Endothelial cell of umbilical vein (primary cell): ENCODE measurements at regions of chr11 and their contacts with region 1.

Region 1: GRCh38 chr11:47886096-47886495 is 37.9 kb upstream of the NUP160 start:
- DNase-seq: peak; percentile 87
- H3K4me3 ChIP-seq: no peak overlapping the region
- H3K27ac ChIP-seq: peak overlapping the region; percentile 9
- H3K4me1 ChIP-seq: peaks cover 18% of the 10 kb centered on the region
- H3K27me3 ChIP-seq: no peaks in the 10 kb centered on the region
- CTCF ChIP-seq: no peak
- POLR2A ChIP-seq: no peak

Region 2: DNA sequence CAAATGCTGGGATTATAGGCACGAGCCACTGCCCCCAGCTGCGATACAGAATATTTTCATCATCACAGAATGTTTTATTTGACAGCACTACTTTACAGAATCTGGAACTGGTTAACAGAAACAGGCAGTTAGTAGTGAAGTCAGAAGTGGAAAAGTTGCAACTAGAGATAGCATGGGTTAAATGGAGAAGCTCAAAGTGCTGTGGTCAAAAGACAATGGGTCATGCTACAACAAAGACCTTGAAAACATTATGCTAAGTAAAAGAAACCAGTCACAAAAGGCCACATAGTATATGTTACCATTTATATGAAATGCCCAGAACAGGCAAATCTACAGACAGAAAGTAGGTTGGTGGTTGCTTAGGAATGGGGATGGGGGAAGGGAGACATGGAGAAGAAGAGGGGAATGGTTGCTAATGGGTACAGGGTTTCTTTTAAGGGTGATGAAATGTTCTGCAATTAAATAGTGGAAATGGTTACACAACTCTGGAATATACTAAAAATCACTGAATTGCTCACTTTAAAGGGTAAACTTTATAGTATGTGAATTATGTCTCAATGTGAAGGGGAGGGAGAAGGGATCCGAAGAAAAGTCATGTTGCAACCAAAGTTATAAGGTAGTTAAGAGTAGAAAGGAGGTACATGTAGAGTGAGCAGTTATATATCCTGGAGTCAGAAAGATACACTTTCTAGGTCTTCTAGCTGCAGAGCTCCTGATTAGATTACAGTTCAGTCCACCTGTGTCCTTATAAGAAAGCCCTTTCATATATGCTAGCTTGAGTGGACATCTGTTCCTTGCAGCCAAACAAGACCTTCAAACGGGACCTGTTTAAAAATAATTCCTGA is 390.9 kb before region 1 on chr11:
- CTCF ChIA-PET with region 1: no interaction called
- POLR2A ChIA-PET with region 1: no interaction called
- dilution Hi-C with region 1: no loop called
- intact Hi-C with region 1: no loop called
- DNase-seq: no peak
- H3K4me3 ChIP-seq: no peak overlapping the region
- H3K27ac ChIP-seq: no peak overlapping the region
- H3K4me1 ChIP-seq: peaks cover 3% of the 10 kb centered on the region
- H3K27me3 ChIP-seq: no peaks in the 10 kb centered on the region
- CTCF ChIP-seq: no peak
- POLR2A ChIP-seq: no peak

Region 3: GRCh38 chr11:47689480-47689879 is 196.6 kb before region 1 on chr11:
- CTCF ChIA-PET with region 1: no interaction called
- POLR2A ChIA-PET with region 1: no interaction called
- dilution Hi-C with region 1: no loop called
- intact Hi-C with region 1: no loop called
- DNase-seq: no peak
- H3K4me3 ChIP-seq: no peak overlapping the region
- H3K27ac ChIP-seq: no peak overlapping the region
- H3K4me1 ChIP-seq: no peaks in the 10 kb centered on the region
- H3K27me3 ChIP-seq: peaks cover 0 to 2% of the 10 kb centered on the region in 2 experiments
- CTCF ChIP-seq: no peak
- POLR2A ChIP-seq: no peak

Region 4: GRCh38 chr11:47837292-47837691 is 48.8 kb before region 1 on chr11:
- CTCF ChIA-PET with region 1: no interaction called
- POLR2A ChIA-PET with region 1: no interaction called
- dilution Hi-C with region 1: no loop called
- intact Hi-C with region 1: no loop called
- DNase-seq: no peak
- H3K4me3 ChIP-seq: no peak overlapping the region
- H3K27ac ChIP-seq: no peak overlapping the region
- H3K4me1 ChIP-seq: peaks cover 2% of the 10 kb centered on the region
- H3K27me3 ChIP-seq: no peaks in the 10 kb centered on the region
- CTCF ChIP-seq: no peak
- POLR2A ChIP-seq: no peak

Region 5: DNA sequence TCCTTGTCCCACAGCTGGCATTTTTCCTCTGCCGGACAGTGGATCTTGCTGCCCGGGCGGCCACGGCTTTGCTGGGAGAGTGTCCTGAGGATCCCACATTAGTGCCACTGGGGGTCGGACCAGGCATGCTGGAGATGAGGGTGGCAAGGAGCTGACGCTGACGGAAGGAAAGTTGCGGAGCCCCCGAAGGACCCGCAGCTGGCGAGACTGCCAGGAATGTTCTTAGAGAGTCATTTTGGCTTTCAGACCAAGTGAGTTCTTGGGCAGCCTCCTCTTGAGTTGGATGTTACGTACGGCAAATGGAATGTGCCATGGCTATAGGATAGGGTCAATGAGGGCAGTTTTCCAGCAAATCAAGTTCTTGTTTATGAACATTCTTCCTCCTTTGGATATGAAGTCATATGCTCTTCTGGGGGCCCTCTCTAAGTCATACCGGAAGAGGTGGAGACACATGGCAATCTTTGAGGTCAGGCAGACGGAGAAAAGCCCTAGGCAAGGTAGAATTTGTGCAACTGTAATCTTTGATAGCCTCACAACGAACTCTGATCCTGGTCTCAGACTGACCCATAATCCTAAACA is 19.5 kb after region 1 on chr11:
- CTCF ChIA-PET with region 1: interaction called, 3 read pairs
- POLR2A ChIA-PET with region 1: interaction called, 8 read pairs
- dilution Hi-C with region 1: no loop called
- intact Hi-C with region 1: loop called (anchors 1 kb)
- DNase-seq: peak; percentile 97
- H3K4me3 ChIP-seq: no peak overlapping the region
- H3K27ac ChIP-seq: peak overlapping the region; percentile 95
- H3K4me1 ChIP-seq: peaks cover 15% of the 10 kb centered on the region
- H3K27me3 ChIP-seq: no peaks in the 10 kb centered on the region
- CTCF ChIP-seq: no peak
- POLR2A ChIP-seq: peak; percentile 63

Region 6: DNA sequence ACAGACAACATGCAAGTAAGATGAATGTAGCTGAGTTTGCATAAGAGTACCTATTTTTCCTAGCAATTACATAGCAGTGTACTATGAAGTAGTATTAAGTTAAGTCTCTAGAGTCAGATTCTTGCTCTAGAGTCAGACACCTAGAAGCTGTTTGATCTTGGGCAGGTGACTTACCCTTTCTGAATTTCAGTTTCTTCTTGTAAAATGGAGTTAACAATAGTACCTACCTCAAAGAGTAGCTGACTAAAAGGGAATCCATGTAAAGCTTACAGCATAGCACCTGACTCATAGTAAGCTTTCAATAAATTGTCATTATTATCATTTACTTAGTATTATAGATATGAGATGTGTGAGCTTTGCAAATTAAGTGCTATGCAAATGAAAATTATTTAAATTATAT is 46.4 kb after region 1 on chr11:
- CTCF ChIA-PET with region 1: interaction called, 11 read pairs
- POLR2A ChIA-PET with region 1: no interaction called
- dilution Hi-C with region 1: no loop called
- intact Hi-C with region 1: no loop called
- DNase-seq: no peak
- H3K4me3 ChIP-seq: no peak overlapping the region
- H3K27ac ChIP-seq: no peak overlapping the region
- H3K4me1 ChIP-seq: no peaks in the 10 kb centered on the region
- H3K27me3 ChIP-seq: no peaks in the 10 kb centered on the region
- CTCF ChIP-seq: no peak
- POLR2A ChIP-seq: no peak